Gastrocnemius medialis (tissue), 4 donors: ENCODE measurements at regions of chr3 and their contacts with region 1.

Region 1: GRCh38 chr3:26437678-26438077 is 184.9 kb upstream of the LRRC3B start:
- DNase-seq: no peak
- ATAC-seq: no peak
- H3K4me3 ChIP-seq: no peak overlapping the region
- H3K27ac ChIP-seq: peak overlapping the region in 1 of 4 donors; percentile 67
- H3K4me1 ChIP-seq: peaks cover 0 to 6% of the 10 kb centered on the region in 2 donors
- H3K27me3 ChIP-seq: no peaks in the 10 kb centered on the region
- CTCF ChIP-seq: no peak
- POLR2A ChIP-seq: no peak

Region 2: DNA sequence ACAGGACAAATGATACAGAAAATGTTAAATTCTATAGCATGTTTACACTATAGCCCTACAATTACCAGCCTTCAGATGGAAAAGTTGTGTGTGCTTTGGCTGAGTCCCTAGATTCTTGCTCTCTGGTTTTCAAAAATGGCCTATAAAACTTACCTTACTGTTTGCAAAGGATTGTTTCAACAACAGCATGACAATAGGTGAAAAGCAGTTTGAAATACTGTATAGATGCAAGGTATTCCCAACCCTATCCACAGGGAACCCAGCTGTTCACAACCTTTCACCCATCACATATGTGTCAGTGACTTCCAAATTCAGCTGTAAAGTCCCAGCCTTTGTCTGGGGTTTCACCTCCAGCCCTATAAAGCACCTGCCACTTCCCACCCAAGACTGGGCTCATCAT is 834.2 kb after region 1 on chr3:
- in situ Hi-C with region 1: no loop called
- intact Hi-C with region 1: loop called (anchors 5 kb)
- DNase-seq: no peak
- ATAC-seq: no peak
- H3K4me3 ChIP-seq: no peak overlapping the region
- H3K27ac ChIP-seq: no peak overlapping the region
- H3K4me1 ChIP-seq: no peaks in the 10 kb centered on the region
- H3K27me3 ChIP-seq: no peaks in the 10 kb centered on the region
- CTCF ChIP-seq: no peak
- POLR2A ChIP-seq: no peak